Activated CD8-positive, alpha-beta T cell treated with anti-CD3 and anti-CD28 coated beads, Interleukin-2, amount 10 ng/mL, durations not matched to agents 7 days and 5 days (primary cell): ENCODE measurements at regions of chrX and their contacts with region 1.

Region 1: DNA sequence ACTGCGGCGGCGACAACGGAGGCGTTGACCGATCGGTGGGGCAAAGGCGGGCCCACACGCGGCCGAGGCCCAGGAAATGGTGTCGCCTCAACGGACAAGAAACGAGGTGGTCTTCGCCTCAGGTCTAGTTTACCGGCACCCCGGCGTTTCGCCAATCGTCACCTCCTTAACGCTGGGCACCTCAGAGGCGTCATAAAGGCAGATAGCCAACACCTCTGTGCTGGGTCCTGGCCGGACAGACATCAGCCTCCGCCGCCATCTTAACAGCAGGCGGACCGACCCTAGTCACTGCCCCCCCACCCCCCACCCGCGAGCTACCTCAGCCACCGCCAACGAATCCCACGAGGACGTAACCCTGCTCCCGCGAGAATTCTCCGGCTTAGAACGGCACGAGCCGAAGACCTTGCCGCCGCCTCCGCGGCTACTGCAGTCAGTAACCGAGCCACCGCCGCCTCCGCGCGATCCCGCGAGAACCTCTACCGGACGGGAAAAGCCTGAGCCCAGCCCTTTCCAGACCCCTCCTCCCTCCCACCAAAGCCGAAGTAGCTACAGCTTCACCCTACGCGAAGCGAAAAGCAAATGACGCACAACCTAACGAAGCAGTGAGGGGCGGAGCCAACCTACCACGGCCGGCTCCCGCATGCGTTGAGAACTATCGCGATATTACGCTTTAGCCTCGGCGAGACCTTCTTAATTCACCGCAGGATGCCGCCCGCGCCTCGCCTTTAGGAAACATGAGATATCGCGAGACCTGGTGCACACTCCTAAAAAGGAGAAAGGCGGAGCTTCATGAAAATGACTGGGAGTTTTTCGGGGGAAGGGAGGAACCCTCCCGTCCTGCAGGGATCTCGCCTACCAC is 2.7 kb downstream of the HUWE1 start:
- DNase-seq: peak; percentile 94
- ATAC-seq: peak; percentile 75
- H3K4me3 Mint-ChIP-seq: peak overlapping the region; percentile 89
- H3K27ac Mint-ChIP-seq: peak overlapping the region; percentile 98
- H3K4me1 Mint-ChIP-seq: peaks cover 30% of the 10 kb centered on the region
- H3K27me3 Mint-ChIP-seq: no peaks in the 10 kb centered on the region

Region 2: DNA sequence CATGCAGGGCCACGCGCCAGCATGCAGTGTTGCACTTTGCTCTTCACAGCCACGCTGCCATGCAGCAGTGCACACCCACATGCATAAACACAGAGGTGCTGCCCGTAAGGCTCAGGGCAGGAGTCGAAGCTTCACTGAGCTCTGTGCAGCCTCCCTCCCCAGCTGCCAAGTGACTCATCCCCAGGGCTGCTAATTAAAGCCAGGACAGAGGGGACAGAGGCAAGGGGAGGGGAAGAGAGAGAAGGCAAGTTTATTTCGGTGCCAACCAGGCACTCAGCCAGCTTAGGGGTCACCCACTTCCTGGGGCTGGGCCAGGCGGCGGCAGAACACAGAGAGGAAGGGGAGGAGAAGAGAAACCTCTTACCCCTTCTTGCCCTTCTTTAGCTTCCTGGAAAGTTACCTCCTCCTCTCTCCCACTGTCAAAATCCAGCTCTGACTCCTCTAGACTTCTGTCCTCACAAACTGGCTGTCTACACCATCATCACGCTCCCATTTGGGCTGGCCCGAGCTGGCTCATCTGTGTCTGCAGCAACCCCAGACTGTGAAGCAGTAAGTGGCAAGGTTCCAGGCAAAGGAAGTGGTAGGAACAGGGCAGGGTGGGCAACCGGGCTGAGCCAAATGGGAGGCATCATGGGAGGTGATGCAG is 396.2 kb before region 1 on chrX:
- CTCF ChIA-PET with region 1: no interaction called
- POLR2A ChIA-PET with region 1: no interaction called
- DNase-seq: peak; percentile 42
- ATAC-seq: peak; percentile 77
- H3K4me3 Mint-ChIP-seq: peak overlapping the region; percentile 76
- H3K27ac Mint-ChIP-seq: peak overlapping the region; percentile 89
- H3K4me1 Mint-ChIP-seq: peaks cover 31% of the 10 kb centered on the region
- H3K27me3 Mint-ChIP-seq: no peaks in the 10 kb centered on the region

Region 3: GRCh38 chrX:53422086-53422860 is 261.5 kb before region 1 on chrX and contains the start of gene SMC1A:
- CTCF ChIA-PET with region 1: no interaction called
- POLR2A ChIA-PET with region 1: interaction called, 10 read pairs
- DNase-seq: peak; percentile 96
- ATAC-seq: peak; percentile 90
- H3K4me3 Mint-ChIP-seq: peak within 1 kb of the TSS; percentile 95
- H3K27ac Mint-ChIP-seq: peak within 1 kb of the TSS; percentile 99
- H3K4me1 Mint-ChIP-seq: peaks cover 26% of the 10 kb centered on the region
- H3K27me3 Mint-ChIP-seq: no peaks in the 10 kb centered on the region
- total RNA-seq, gene SMC1A: 151 to 155 TPM

Region 4: GRCh38 chrX:53547668-53548067 is 136.1 kb before region 1 on chrX:
- CTCF ChIA-PET with region 1: no interaction called
- POLR2A ChIA-PET with region 1: no interaction called
- DNase-seq: peak; percentile 21
- ATAC-seq: no peak
- H3K4me3 Mint-ChIP-seq: no peak overlapping the region
- H3K27ac Mint-ChIP-seq: peak overlapping the region; percentile 68
- H3K4me1 Mint-ChIP-seq: peaks cover 16% of the 10 kb centered on the region
- H3K27me3 Mint-ChIP-seq: no peaks in the 10 kb centered on the region

Region 5: DNA sequence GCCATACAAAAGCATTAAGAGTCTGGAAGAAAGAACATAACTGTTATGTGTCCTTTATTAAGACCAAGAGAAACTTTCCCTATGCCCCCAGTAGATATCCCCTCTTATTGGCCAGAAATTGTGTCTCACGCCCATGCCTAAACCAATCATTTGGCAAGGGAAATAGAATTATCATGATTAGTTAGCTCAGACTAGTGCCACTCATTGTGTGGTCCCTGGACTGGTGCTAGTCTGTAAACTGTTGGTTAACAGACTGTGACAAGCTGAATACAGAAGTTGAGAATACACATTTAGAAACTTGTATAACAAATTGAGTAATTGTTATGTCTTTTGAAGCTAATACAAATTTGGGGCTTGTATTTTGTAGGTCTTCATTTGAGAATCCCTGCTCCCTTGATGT is 10.9 kb after region 1 on chrX:
- CTCF ChIA-PET with region 1: no interaction called
- POLR2A ChIA-PET with region 1: interaction called, 13 read pairs
- DNase-seq: no peak
- ATAC-seq: no peak
- H3K4me3 Mint-ChIP-seq: no peak overlapping the region
- H3K27ac Mint-ChIP-seq: no peak overlapping the region
- H3K4me1 Mint-ChIP-seq: peaks cover 21% of the 10 kb centered on the region
- H3K27me3 Mint-ChIP-seq: no peaks in the 10 kb centered on the region

Region 6: GRCh38 chrX:53714580-53715345 is 31.0 kb after region 1 on chrX:
- CTCF ChIA-PET with region 1: interaction called, 46 read pairs
- POLR2A ChIA-PET with region 1: interaction called, 317 read pairs
- DNase-seq: peak; percentile 82
- ATAC-seq: peak; percentile 87
- H3K4me3 Mint-ChIP-seq: peak overlapping the region; percentile 79
- H3K27ac Mint-ChIP-seq: peak overlapping the region; percentile 99
- H3K4me1 Mint-ChIP-seq: peaks cover 49% of the 10 kb centered on the region
- H3K27me3 Mint-ChIP-seq: no peaks in the 10 kb centered on the region